Dendritic cell treated with granulocyte-macrophage colony-stimulating factor and Interleukin-4, amounts not matched to agents 40 ng/mL and 50 ng/mL, for 4 days (primary cell): ENCODE measurements at regions of chr3 and their contacts with region 1.

Region 1: GRCh38 chr3:148955544-148956346 is 35.6 kb upstream of the GYG1 start:
- H3K4me3 Mint-ChIP-seq: no peak overlapping the region
- H3K27ac Mint-ChIP-seq: peak overlapping the region; percentile 26
- H3K4me1 Mint-ChIP-seq: no peaks in the 10 kb centered on the region
- H3K27me3 Mint-ChIP-seq: no peaks in the 10 kb centered on the region

Region 2: DNA sequence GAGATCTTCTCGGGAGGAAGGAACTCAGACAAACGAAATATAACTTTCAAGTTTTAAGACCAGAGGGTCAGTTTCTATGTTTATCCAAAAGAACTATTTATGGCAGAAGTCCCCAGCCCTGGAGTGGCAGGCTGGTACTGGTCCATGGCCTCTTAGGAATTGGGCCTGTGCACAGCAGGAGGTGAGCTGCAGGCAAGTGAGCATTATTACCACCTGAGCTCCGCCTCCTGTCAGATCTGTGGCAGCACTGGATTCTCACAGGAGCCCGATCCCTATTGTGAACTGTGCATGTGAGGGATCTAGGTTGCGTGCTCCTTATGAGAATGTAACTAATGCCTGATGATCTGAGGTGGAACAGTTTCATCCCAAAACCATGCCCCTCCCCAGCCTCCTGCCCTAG is 159.4 kb after region 1 on chr3:
- intact Hi-C with region 1: loop called (anchors 5 kb)
- H3K4me3 Mint-ChIP-seq: no peak overlapping the region
- H3K27ac Mint-ChIP-seq: no peak overlapping the region
- H3K4me1 Mint-ChIP-seq: peaks cover 6% of the 10 kb centered on the region
- H3K27me3 Mint-ChIP-seq: no peaks in the 10 kb centered on the region

Region 3: DNA sequence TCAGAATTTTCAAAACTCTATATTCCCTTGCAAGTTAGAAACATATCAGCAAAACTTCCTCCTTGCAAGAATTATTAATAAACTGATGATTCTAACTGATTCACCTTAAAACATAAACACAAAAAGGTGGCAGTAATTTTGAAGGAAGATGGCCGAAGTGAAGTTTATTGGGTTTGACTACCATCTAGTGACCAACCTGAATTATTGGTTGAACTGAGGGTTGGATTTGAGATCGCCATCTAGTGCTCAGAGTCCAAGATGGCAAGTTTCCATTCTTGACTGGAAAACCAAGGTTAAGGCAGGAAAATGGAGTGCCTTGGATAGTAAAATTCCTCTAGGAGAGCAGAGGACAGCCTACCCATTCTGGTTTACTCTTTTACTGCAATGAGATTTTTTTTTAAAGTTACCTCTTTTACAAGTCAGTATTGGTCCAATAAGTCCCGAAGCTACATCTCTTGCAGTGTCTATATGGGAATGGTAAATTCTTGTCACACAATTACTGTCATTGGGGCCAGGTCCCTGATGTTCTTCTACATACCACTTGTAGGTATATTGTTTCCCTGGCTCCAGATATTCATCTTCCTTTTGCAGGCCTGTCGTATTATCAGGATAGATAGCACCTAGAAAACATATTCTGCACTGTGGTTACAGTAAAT is 317.5 kb after region 1 on chr3:
- intact Hi-C with region 1: loop called (anchors 5 kb)
- H3K4me3 Mint-ChIP-seq: no peak overlapping the region
- H3K27ac Mint-ChIP-seq: no peak overlapping the region
- H3K4me1 Mint-ChIP-seq: peaks cover 7% of the 10 kb centered on the region
- H3K27me3 Mint-ChIP-seq: no peaks in the 10 kb centered on the region

Region 4: DNA sequence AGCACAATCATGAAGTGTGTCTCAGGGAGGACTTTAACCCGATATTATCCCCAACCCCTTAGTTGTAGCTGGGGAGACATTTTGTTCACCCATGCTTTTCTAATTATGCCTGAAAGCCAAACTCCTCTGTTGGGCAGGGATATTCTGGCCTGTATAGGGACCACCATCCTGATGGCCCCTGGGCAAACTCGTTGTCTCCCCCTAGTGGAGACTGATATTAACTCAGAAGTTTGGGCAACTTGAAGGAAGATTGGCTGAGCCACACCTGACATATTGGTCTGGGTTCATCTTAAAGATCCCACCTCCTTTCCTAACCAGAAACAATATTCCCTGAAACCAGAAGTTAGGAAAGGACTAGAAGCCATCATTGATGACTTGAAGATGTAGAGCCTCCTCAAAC is 335.4 kb after region 1 on chr3:
- intact Hi-C with region 1: no loop called
- H3K4me3 Mint-ChIP-seq: no peak overlapping the region
- H3K27ac Mint-ChIP-seq: no peak overlapping the region
- H3K4me1 Mint-ChIP-seq: peaks cover 12% of the 10 kb centered on the region
- H3K27me3 Mint-ChIP-seq: no peaks in the 10 kb centered on the region